Calu3 (cell line): ENCODE measurements at regions of chr20 and their contacts with region 1.

Region 1: DNA sequence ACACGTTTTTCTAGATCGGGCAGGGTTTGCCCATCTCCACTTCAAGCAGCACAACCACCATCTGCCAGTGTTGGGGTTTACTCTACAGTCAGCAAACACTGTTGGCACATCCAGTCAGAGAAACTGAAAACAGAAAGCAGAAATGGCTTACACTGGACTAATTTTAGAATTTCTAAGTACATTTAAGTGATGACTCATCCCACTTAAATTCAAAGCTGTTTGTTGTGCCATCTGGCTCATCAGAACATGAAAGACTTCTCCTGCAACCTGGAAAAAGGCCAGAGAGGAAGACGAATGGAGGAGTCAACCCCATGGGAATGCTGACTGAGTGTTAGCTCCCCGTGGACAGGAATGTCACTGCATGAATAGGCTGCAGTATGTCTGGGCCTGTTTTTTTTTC is 21.8 kb downstream of the FAM209B start:
- DNase-seq: peak; percentile 58
- H3K4me3 Mint-ChIP-seq: no peak overlapping the region
- H3K27ac Mint-ChIP-seq: no peak overlapping the region
- H3K4me1 Mint-ChIP-seq: peaks cover 9% of the 10 kb centered on the region
- H3K27me3 Mint-ChIP-seq: peaks cover 57% of the 10 kb centered on the region
- CTCF ChIP-seq: no peak

Region 2: DNA sequence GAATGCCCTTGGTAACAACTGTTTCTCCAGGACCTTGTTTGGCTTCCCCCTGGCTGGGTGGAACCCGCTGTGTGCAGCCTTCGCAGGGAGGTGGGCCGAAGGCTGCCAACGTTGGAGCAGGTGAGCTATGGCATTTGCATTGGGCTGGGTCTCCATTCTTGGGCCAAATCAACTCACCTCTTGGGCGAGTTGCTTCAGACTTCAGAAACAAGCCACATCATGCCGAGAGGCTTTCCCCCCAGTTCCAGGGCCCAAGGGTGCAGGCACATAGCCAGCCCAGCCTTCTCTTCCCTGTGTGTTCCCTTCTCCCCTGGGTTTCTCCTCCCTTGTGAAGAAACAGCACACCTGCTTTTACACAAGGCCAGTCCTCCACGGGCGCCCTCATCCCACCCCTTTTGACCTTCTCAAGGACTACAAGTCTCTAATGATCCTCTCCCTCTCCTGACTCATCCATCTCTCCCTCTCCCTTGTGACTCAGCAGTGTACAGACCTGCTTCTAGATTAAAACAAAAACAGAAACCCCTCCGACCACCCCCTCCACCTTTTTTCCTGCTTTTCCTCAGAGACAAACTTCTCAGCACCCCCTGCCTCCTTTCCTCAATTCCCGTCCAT is 19.8 kb after region 1 on chr20:
- CTCF ChIA-PET with region 1: interaction called, 7 read pairs
- intact Hi-C with region 1: loop called (anchors 2 kb)
- DNase-seq: no peak
- H3K4me3 Mint-ChIP-seq: no peak overlapping the region
- H3K27ac Mint-ChIP-seq: no peak overlapping the region
- H3K4me1 Mint-ChIP-seq: no peaks in the 10 kb centered on the region
- H3K27me3 Mint-ChIP-seq: peaks cover 39% of the 10 kb centered on the region
- CTCF ChIP-seq: no peak

Region 3: DNA sequence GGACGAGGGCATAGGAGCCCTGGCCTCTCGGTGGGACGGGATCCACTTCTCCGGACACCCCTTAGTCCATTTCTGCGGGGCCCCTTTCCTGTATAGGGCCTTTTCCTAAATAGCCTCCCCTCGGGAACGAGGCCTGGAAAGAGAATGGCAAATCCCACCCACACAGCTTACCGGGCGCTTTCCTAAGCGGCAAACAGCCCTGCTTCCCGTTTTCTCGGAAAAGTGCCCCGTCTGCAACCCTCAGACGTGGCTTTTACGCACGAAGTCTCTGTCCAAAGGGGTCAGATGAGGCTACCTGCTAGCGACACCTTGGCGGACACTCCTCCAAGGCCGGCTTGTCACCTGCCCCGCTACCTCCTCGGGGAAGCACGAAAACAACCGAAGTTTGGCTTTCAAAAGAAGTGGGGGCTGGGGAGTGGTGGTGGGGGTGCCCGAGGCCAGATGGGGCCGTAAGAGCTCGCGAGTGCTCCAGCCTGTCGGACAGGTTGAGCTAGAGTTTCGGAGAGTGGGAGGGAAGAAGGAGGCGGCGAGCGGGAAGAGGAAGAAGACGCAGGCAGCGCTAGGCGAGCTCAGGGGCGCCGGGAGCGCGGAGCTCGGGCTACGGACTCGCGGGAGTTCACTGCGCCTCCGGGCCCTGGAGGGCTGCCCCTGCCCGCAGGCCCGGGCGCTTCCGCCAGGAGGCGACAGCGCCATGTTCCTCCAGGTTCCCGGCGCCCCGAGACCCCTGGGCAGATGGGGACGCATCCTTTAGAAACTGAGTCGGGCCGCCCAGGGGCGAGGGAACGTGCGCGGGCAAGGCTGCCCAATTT is 75.0 kb after region 1 on chr20:
- CTCF ChIA-PET with region 1: no interaction called
- intact Hi-C with region 1: loop called (anchors 10 kb)
- DNase-seq: peak; percentile 84
- H3K4me3 Mint-ChIP-seq: peak overlapping the region; percentile 81
- H3K27ac Mint-ChIP-seq: peak overlapping the region; percentile 83
- H3K4me1 Mint-ChIP-seq: no peaks in the 10 kb centered on the region
- H3K27me3 Mint-ChIP-seq: no peaks in the 10 kb centered on the region
- CTCF ChIP-seq: no peak

Region 4: GRCh38 chr20:56689288-56689687 is 134.4 kb after region 1 on chr20:
- CTCF ChIA-PET with region 1: no interaction called
- intact Hi-C with region 1: loop called (anchors 10 kb)
- DNase-seq: no peak
- H3K4me3 Mint-ChIP-seq: no peak overlapping the region
- H3K27ac Mint-ChIP-seq: no peak overlapping the region
- H3K4me1 Mint-ChIP-seq: peaks cover 7% of the 10 kb centered on the region
- H3K27me3 Mint-ChIP-seq: peaks cover 41% of the 10 kb centered on the region
- CTCF ChIP-seq: no peak

Region 5: GRCh38 chr20:56788040-56788983 is 233.4 kb after region 1 on chr20:
- CTCF ChIA-PET with region 1: no interaction called
- intact Hi-C with region 1: loop called (anchors 10 kb)
- DNase-seq: peak; percentile 76
- H3K4me3 Mint-ChIP-seq: peak overlapping the region; percentile 18
- H3K27ac Mint-ChIP-seq: peak overlapping the region; percentile 83
- H3K4me1 Mint-ChIP-seq: peaks cover 21% of the 10 kb centered on the region
- H3K27me3 Mint-ChIP-seq: peaks cover 22% of the 10 kb centered on the region
- CTCF ChIP-seq: no peak

Region 6: DNA sequence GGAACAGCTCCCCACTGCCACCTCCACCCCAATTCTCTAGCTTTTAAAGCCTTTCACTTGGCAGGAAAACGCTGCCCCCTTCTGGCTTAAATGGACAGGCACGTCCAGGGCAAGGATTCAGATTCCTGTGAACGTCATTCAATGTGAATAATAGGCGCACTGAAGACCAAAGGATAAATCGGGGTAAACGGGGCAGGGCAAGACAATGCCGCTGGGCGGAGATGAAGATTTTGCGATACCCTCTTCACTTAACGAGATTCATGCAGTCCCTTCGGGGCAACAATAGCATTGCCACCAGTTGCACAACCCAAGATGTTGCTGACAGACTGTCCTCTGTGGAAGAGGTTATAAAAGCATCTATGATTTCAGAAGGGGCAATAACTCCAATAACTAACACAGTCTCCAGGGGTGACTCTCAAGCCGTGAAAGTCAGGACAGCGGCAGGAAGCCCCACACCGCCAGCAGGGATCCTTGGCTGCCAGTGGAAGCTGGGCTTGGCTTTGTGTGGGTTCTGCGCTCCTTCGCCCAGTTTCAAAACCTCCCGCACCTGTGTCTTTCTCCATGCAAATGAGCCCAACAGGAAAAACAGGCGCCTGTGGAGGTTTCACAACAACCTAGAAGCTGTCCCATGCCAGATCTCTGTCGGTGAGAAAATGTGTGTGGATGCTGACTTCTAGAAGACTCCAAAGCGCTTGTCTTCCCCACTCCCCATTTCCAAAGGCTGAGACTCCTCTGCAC is 419.8 kb after region 1 on chr20:
- CTCF ChIA-PET with region 1: interaction called, 13 read pairs
- intact Hi-C with region 1: loop called (anchors 1 kb)
- DNase-seq: peak; percentile 70
- H3K4me3 Mint-ChIP-seq: no peak overlapping the region
- H3K27ac Mint-ChIP-seq: no peak overlapping the region
- H3K4me1 Mint-ChIP-seq: no peaks in the 10 kb centered on the region
- H3K27me3 Mint-ChIP-seq: peaks cover 96% of the 10 kb centered on the region
- CTCF ChIP-seq: peak; percentile 81

Region 7: GRCh38 chr20:56995576-56996075 is 440.8 kb after region 1 on chr20:
- CTCF ChIA-PET with region 1: interaction called, 4 read pairs
- intact Hi-C with region 1: loop called (anchors 1 kb)
- DNase-seq: peak; percentile 75
- H3K4me3 Mint-ChIP-seq: no peak overlapping the region
- H3K27ac Mint-ChIP-seq: no peak overlapping the region
- H3K4me1 Mint-ChIP-seq: no peaks in the 10 kb centered on the region
- H3K27me3 Mint-ChIP-seq: peaks cover 88% of the 10 kb centered on the region
- CTCF ChIP-seq: peak; percentile 90